Colonic mucosa (tissue), 4 donors: ENCODE measurements at regions of chr3 and their contacts with region 1.

Region 1: GRCh38 chr3:105366326-105367062 is at the start of gene ALCAM:
- DNase-seq: peak; percentile 94
- H3K4me3 ChIP-seq: peak within 1 kb of the TSS; percentile 70
- H3K27ac ChIP-seq: peak within 1 kb of the TSS; percentile 91
- H3K4me1 ChIP-seq: no peaks in the 10 kb centered on the region
- H3K27me3 ChIP-seq: no peaks in the 10 kb centered on the region
- CTCF ChIP-seq: peak; percentile 27
- total RNA-seq, gene ALCAM: 17.8 to 29.6 TPM

Region 2: GRCh38 chr3:104596551-104596950 is 769.9 kb before region 1 on chr3:
- intact Hi-C with region 1: loop called (anchors 10 kb)
- DNase-seq: no peak
- H3K4me3 ChIP-seq: no peak overlapping the region
- H3K27ac ChIP-seq: no peak overlapping the region
- H3K4me1 ChIP-seq: no peaks in the 10 kb centered on the region
- H3K27me3 ChIP-seq: no peaks in the 10 kb centered on the region
- CTCF ChIP-seq: no peak

Region 3: GRCh38 chr3:105062853-105063252 is 303.6 kb before region 1 on chr3:
- intact Hi-C with region 1: no loop called
- DNase-seq: no peak
- H3K4me3 ChIP-seq: no peak overlapping the region
- H3K27ac ChIP-seq: no peak overlapping the region
- H3K4me1 ChIP-seq: no peaks in the 10 kb centered on the region
- H3K27me3 ChIP-seq: no peaks in the 10 kb centered on the region
- CTCF ChIP-seq: no peak

Region 4: DNA sequence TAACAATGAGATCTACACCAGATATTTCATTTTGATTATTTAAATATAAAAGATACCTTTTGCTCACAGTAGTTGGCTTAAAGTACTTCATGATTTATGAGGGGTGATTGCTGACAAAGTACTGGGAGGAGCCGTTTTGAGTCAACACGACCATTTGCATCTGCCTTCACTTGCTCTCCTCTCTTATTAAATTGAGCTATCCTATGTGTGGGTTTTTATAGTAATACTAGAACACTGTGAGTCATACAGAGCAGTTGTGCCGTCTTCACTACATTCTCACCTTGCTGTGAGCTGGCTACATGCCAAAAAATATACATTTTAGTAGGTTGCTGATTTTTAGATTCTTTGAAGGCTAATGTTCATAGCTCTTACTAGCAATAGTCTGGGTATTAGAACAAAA is 161.5 kb after region 1 on chr3:
- intact Hi-C with region 1: loop called (anchors 10 kb)
- DNase-seq: no peak
- H3K4me3 ChIP-seq: no peak overlapping the region
- H3K27ac ChIP-seq: no peak overlapping the region
- H3K4me1 ChIP-seq: no peaks in the 10 kb centered on the region
- H3K27me3 ChIP-seq: no peaks in the 10 kb centered on the region
- CTCF ChIP-seq: no peak

Region 5: GRCh38 chr3:105674437-105675065 is 308.1 kb after region 1 on chr3:
- intact Hi-C with region 1: no loop called
- DNase-seq: no peak
- H3K4me3 ChIP-seq: no peak overlapping the region
- H3K27ac ChIP-seq: no peak overlapping the region
- H3K4me1 ChIP-seq: no peaks in the 10 kb centered on the region
- H3K27me3 ChIP-seq: no peaks in the 10 kb centered on the region
- CTCF ChIP-seq: no peak

Region 6: GRCh38 chr3:105868742-105869530 is 502.4 kb after region 1 on chr3 and contains the start of gene CBLB:
- intact Hi-C with region 1: no loop called
- DNase-seq: peak; percentile 92
- H3K4me3 ChIP-seq: peak within 1 kb of the TSS; percentile 94
- H3K27ac ChIP-seq: peak within 1 kb of the TSS; percentile 98
- H3K4me1 ChIP-seq: no peaks in the 10 kb centered on the region
- H3K27me3 ChIP-seq: no peaks in the 10 kb centered on the region
- CTCF ChIP-seq: no peak
- total RNA-seq, gene CBLB: 20.2 to 34.5 TPM